ENCODE measurements at regions of chr5 and their contacts with region 1.

Region 1: DNA sequence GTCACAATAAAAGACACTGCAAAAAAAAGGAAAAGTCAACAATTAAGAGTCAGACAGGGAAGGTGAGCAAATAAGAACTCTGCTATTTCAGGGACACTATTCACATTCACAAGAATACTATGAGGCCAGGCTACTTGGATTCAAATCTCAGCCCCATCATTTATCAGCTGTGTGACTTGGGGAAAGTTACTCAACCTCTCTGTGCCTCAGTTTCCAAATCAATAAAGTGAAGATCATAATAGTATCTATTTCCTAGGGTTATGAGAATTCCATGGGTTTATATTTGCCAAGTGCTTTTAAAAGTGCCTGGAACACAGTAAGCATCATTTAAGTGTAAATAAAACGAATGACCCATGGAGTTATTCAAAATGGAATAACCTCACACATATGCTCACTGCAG is 56.4 kb downstream of the ALDH7A1 start:
- DNase-seq: no peak
- H3K4me3 ChIP-seq: no peak overlapping the region
- CTCF ChIP-seq: no peak

Region 2: GRCh38 chr5:126513703-126514102 is 24.9 kb before region 1 on chr5:
- CTCF ChIA-PET with region 1: interaction called, 10 read pairs
- POLR2A ChIA-PET with region 1: no interaction called
- DNase-seq: no peak
- H3K4me3 ChIP-seq: no peak overlapping the region
- CTCF ChIP-seq: no peak

Region 3: GRCh38 chr5:126594676-126595485 is 56.3 kb after region 1 on chr5 and contains the start of gene ALDH7A1:
- CTCF ChIA-PET with region 1: interaction called, 15 read pairs
- POLR2A ChIA-PET with region 1: interaction called, 4 read pairs
- DNase-seq: peak; percentile 44
- H3K4me3 ChIP-seq: peak within 1 kb of the TSS; percentile 76
- CTCF ChIP-seq: peak; percentile 71